ENCODE measurements at regions of chr2 and their contacts with region 1.

Region 1: DNA sequence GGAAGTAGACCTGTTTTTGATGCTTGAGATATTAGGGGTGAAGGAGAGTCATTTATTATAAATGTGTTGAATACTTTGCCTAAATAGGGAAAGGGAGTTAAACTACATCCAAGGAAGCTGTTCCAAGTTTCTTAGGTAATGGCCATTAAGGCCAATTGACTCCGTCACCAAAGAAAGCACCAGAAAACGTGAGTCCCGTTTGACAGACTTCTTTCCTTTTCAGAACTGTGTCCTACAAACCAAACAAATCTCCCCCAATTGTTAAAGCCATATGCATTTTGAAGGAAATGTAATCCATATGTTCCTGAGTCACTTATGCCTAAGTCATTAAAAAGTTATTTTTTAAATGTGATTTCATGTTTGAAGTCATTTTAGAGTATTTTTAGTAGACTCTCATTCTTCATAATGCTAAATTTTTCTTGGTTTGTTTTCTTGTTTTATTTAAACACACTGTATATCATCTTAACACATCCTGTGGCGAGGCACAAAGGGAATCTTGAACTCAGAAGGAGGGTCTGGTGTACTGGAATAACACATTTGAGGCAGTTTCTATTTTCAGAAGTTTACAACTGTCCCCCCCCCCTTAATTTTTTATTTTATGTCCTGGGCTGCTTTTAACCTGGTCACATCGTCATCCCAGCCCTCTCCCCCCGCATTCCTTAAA is 133.7 kb downstream of the RHBDD1 start:
- DNase-seq: peak; percentile 44
- H3K4me3 ChIP-seq: no peak overlapping the region
- H3K27me3 ChIP-seq: no peaks in the 10 kb centered on the region
- CTCF ChIP-seq: no peak

Region 2: DNA sequence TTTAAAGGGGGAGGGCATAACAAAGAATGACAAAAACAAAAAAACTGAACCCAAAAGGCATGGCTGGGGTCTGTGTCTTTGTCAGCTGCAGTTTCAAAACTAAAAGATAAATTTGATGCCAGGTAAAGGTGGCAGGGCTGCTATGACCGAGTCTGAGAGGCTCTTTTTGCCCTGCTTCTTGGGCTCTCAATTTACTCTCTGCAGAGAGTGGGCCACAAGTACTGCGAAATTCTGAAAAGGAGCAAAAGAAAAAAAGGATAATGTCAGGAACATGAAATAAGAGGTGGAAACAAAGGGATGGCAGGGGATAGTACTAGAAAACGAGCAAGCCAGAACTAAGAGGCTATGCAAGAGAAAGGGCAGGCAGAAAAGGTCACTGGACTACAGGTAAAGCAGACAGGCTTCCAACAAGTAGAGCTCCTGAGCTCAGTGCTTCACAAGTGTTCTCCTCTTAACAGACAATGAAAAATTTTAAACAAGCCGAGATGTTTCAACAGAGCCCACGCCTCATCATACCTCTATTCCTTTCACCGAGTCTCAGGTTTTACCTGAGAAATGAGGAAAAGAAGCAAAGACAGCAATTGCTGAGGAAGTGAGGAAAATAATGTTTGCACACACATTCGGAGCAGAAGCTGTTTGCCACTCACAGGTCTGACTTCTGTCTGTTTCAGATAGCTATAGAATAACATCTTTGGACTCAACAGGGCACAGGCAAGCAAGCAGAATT is 177.2 kb before region 1 on chr2:
- CTCF ChIA-PET with region 1: interaction called, 3 read pairs
- POLR2A ChIA-PET with region 1: interaction called, 13 read pairs
- DNase-seq: no peak
- H3K4me3 ChIP-seq: peak overlapping the region; percentile 99
- H3K27me3 ChIP-seq: no peaks in the 10 kb centered on the region
- CTCF ChIP-seq: no peak

Measured in BJ (cell line).